ENCODE measurements at regions of chr15 and their contacts with region 1.

Region 1: GRCh38 chr15:90931737-90932659 is at the start of gene HDDC3:
- DNase-seq: peak; percentile 85
- H3K4me3 ChIP-seq: peak within 1 kb of the TSS; percentile 63 to 74 (median 69)
- H3K27ac ChIP-seq: peak within 1 kb of the TSS; percentile 50
- H3K4me1 ChIP-seq: peaks cover 39% of the 10 kb centered on the region
- H3K27me3 ChIP-seq: no peaks in the 10 kb centered on the region
- CTCF ChIP-seq: peak; percentile 64 to 98
- total RNA-seq, gene HDDC3: 10.5 to 16.2 TPM

Region 2: GRCh38 chr15:90648137-90649070 is 283.6 kb before region 1 on chr15:
- CTCF ChIA-PET with region 1: interaction called, 5 read pairs
- dilution Hi-C with region 1: no loop called
- in situ Hi-C with region 1: no loop called
- intact Hi-C with region 1: loop called (anchors 1 kb)
- DNase-seq: peak; percentile 64
- H3K4me3 ChIP-seq: no peak overlapping the region
- H3K27ac ChIP-seq: no peak overlapping the region
- H3K4me1 ChIP-seq: no peaks in the 10 kb centered on the region
- H3K27me3 ChIP-seq: no peaks in the 10 kb centered on the region
- CTCF ChIP-seq: peak; percentile 89 to 92

Region 3: DNA sequence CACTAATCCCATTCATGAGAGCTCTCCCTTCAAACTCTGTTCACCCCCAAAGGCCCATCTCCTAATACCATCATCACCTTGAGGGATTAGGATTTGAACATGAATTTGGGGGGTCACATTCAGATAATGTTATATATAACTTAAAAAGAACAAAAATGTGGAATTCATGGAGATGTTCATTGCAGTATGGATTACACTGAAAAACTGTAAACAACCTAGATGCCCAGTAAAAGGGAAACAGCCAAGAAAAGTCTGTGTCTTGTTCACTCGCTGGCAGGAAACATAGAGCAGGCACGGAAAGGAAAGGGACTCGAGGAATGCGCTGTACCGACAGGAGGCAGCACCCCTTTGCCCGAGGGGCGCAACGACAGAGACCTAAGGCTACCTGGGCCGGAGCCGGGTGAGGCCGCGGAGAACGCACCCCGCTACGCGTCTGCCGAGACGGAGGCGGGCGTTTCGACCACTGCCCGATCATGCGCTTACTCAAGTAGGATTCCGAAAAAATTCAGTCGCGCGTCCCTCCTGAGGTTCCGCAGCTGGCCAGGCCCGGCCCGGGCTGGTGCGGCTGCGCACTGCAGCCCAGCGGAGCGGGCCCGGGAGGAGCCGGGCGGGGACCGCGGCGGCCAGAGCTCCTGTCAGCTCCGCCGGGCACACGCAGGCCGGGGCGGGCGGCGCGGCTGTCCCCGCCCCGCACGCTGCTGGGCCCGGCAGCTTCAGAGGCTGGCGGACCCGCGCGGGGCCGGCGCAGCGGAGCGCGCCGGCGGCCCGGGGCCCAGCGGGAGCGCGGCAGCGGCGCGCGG is 29.8 kb before region 1 on chr15:
- CTCF ChIA-PET with region 1: interaction called, 4 read pairs
- dilution Hi-C with region 1: no loop called
- in situ Hi-C with region 1: no loop called
- intact Hi-C with region 1: loop called (anchors 1 kb)
- DNase-seq: peak; percentile 85
- H3K4me3 ChIP-seq: peak overlapping the region; percentile 57 to 75 (median 69)
- H3K27ac ChIP-seq: no peak overlapping the region
- H3K4me1 ChIP-seq: peaks cover 18% of the 10 kb centered on the region
- H3K27me3 ChIP-seq: no peaks in the 10 kb centered on the region
- CTCF ChIP-seq: peak; percentile 60 to 87

Region 4: DNA sequence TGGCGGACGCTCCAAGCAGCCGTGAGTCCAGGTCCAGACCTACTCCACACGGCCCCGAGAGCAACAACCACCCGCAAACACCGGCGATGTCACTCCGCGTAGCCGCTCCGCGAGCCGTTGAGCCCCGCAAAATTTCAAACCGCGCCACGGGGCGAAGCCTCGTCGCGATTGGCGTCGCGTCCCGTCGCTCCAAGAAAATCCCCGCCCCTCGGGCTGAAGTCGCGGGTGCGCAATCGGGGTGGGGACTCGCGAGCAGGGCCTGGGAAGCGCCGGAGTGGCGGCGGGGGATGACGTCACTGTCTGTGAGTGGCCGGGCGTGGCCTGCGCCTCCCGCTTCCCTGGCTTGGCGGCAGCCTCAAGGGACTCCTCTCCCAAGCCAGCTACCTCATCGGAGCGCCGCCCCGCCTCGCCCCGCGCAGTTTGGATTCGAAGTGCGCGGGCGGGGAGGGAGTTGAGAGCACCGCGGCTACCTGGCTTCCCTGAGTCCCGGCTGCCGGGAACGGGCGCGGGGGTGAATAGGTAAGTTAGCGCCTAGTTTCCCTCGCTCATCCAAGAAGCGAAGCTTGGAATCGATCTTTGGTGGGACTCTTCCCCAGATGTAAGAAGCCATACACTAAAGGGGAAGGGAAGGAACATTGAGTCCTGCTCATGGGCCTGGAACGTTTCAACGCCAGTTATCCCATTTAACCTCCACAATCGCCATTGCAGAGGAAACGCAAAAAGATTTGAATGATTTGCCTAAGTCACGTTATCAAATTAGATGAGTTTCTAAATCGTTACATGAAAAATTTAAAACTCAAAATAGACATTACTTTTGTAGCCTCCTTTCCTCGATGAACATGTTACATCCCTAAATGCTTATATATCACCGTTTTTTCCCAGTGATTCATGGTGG is 62.7 kb after region 1 on chr15 and contains the start of gene PRC1:
- CTCF ChIA-PET with region 1: no interaction called
- dilution Hi-C with region 1: no loop called
- in situ Hi-C with region 1: no loop called
- intact Hi-C with region 1: loop called (anchors 2 kb)
- DNase-seq: peak; percentile 99
- H3K4me3 ChIP-seq: peak within 1 kb of the TSS; percentile 83 to 100 (median 96)
- H3K27ac ChIP-seq: peak within 1 kb of the TSS; percentile 94
- H3K4me1 ChIP-seq: peaks cover 8% of the 10 kb centered on the region
- H3K27me3 ChIP-seq: no peaks in the 10 kb centered on the region
- CTCF ChIP-seq: no peak
- total RNA-seq, gene PRC1: 4.5 to 100 TPM

Region 5: DNA sequence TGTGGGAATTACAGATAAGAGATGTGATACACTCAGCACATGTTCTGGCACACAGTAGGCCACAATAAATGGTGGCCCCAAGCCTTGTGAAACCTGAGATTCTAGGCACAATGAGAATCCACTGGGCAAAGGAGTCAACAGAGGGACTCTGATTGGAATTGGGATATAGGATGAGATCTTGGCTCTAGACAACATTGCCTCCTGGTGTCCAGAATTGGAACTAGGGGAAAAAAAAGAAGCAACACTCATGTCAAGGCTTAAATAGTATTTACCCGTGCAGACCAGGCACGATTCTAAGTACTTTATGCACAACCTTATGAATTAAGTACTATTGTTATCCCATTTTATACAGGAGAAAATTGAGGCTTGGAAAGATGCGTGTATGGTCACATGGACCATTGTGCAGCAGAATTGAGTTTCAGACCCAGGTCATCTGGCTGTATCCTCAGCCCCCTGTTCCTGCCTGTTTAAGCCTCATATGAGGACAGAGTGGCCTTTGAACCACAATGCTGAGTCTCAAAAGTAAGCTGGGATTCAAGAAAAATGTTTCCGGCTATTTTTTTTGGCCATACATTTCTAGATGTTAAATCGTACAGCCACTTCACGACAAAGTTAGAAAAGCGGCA is 292.9 kb after region 1 on chr15:
- CTCF ChIA-PET with region 1: no interaction called
- dilution Hi-C with region 1: no loop called
- in situ Hi-C with region 1: no loop called
- intact Hi-C with region 1: loop called (anchors 10 kb)
- DNase-seq: peak; percentile 37
- H3K4me3 ChIP-seq: no peak overlapping the region
- H3K27ac ChIP-seq: no peak overlapping the region
- H3K4me1 ChIP-seq: no peaks in the 10 kb centered on the region
- H3K27me3 ChIP-seq: peaks cover 3% of the 10 kb centered on the region
- CTCF ChIP-seq: peak; percentile 63 to 85